ENCODE measurements at regions of chr3 and their contacts with region 1.

Region 1: DNA sequence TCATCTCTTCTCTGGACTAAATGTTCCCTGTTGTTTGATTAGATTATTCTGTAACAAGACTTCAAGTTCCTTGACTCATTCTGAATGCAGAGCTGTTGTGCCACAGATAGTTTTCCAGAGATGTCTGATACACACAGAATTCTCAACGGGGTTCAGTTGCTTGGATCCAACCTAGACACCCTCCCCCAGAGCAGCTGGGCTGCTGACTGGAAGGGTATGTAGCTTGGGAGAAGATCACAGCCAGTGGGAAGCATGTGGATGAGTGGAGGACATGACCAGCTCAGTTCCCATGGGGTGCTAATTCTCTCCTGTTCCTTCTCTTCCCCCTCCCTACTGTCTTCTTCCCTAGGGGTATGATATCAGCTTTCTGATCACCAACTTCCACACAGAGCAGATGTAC is 6.6 kb upstream of the TTLL3 start:
- DNase-seq: no peak
- ATAC-seq: no peak
- H3K4me3 Mint-ChIP-seq: no peak overlapping the region
- H3K27ac Mint-ChIP-seq: peak overlapping the region; percentile 1
- H3K4me1 Mint-ChIP-seq: peaks cover 29% of the 10 kb centered on the region
- H3K27me3 Mint-ChIP-seq: no peaks in the 10 kb centered on the region
- CTCF ChIP-seq: no peak

Region 2: DNA sequence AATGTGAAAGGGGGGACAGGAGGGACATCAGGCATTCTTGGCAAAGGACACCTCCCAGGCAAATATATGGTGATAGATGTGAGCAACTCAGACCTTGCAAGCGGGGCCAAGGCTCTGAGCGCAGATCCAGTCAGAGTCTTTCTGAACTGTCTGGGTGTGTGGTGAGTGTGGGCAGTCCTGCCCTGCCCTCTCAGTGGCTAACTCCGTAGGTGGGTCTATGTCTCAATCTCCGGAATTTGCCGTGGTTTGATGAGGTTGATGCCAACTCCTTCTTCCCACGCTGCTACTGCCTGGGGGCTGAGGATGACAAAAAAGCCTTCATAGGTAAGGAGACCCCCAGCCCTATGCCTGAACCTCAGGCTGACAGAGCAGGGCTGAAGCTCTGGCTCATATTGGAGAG is 13.9 kb after region 1 on chr3:
- CTCF ChIA-PET with region 1: interaction called, 3 read pairs
- POLR2A ChIA-PET with region 1: interaction called, 28 read pairs
- intact Hi-C with region 1: no loop called
- DNase-seq: no peak
- ATAC-seq: no peak
- H3K4me3 Mint-ChIP-seq: no peak overlapping the region
- H3K27ac Mint-ChIP-seq: no peak overlapping the region
- H3K4me1 Mint-ChIP-seq: no peaks in the 10 kb centered on the region
- H3K27me3 Mint-ChIP-seq: no peaks in the 10 kb centered on the region
- CTCF ChIP-seq: no peak

Measured in activated CD8-positive, alpha-beta T cell treated with anti-CD3 and anti-CD28 coated beads for 36 hours (primary cell).